Left ventricle myocardium inferior (tissue), 1 donor: ENCODE measurements at regions of chr10 and their contacts with region 1.

Region 1: DNA sequence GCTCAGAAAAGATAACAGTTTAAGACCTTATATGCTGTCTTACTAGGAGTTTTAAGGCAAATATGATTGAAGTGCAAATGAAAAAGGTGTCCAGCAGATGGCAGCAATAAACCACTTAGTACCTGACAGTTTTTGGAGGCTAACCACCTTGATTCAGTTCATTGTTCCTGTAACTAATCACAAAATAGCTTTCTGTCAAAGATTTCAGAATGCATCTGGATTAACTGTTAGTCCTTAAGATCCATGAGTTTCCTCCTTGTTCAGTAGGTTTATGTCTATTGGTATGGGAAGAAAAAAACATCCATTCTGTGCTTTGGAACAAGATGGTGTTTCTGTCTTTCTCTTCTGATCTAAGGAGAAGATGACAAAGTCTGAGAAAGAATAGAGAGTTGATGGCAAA is 46.6 kb downstream of the CCSER2 start:
- DNase-seq: no peak
- H3K4me3 ChIP-seq: no peak overlapping the region
- H3K27ac ChIP-seq: no peak overlapping the region
- H3K4me1 ChIP-seq: no peaks in the 10 kb centered on the region
- H3K27me3 ChIP-seq: no peaks in the 10 kb centered on the region
- CTCF ChIP-seq: peak; percentile 78

Region 2: DNA sequence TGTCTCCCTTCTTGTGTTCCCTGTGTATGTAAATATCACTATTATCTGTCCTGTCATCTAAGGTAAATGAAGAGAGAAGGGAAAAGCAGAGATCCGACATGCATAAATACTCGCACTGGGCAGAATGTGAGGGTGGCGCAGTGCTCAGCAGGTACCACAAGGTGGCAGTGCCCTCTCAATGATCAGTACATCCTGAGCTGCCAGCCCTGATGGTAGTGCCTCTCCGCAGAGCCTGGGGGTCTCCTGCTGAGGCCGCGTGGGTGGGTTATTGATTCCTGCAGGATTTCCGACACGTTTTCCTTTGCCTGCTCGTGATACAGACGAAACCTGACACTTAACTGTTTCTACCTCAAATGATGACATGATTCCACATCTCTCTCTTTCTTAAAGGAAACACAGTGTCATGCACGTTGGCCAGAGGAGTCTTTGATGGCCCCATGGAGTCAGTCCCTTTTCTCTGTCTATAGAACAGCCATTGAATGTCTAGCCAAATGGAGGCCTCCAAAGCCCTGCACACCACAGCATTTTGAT is 110.3 kb before region 1 on chr10:
- intact Hi-C with region 1: loop called (anchors 10 kb)
- DNase-seq: peak; percentile 50
- H3K4me3 ChIP-seq: no peak overlapping the region
- H3K27ac ChIP-seq: no peak overlapping the region
- H3K4me1 ChIP-seq: peaks cover 9% of the 10 kb centered on the region
- H3K27me3 ChIP-seq: peaks cover 47% of the 10 kb centered on the region
- CTCF ChIP-seq: peak; percentile 97

Region 3: DNA sequence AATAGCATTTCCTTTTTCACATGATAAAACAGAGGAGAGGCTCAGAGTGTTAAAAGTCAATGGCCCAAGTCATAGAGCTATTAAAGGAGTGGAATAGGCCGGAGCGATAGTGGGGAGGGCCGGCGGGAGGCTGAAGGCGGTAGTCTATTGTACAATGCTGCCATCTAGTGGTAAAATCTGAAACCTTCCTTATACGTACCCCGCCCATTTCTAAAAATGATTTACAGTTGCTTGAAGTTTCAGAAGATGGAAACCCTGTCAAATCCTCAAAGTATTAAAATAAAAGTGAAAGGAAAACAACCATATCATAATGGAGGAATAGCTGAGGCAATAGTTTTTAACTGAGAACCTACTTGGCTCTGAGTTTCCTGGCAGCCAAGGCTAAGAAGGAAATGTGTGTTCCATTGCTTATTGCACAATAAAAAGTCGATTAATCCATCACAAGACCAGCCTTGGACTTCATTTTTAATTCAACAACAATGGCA is 162.5 kb after region 1 on chr10:
- intact Hi-C with region 1: loop called (anchors 2 kb)
- DNase-seq: peak; percentile 42
- H3K4me3 ChIP-seq: no peak overlapping the region
- H3K27ac ChIP-seq: no peak overlapping the region
- H3K4me1 ChIP-seq: peaks cover 16% of the 10 kb centered on the region
- H3K27me3 ChIP-seq: peaks cover 41% of the 10 kb centered on the region
- CTCF ChIP-seq: peak; percentile 88

Region 4: DNA sequence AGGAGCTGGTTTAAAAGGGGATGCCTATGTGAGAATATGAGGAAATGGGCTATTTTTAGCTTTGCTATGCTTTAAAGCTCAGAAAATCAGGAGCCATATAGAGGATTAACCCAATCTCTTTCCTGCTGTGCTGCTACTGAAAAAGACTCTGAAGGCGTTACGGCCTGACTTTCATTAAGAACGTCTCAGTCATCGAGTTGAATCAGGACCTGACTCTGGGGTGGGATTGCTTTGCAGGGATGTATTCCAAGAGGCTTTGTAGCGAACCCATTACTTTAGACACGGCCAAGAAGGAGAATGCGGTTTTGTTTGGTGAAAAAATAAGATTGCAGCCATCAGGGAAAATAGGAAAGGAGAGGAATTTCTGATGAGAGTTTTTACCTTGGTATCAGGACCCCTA is 380.3 kb after region 1 on chr10:
- intact Hi-C with region 1: no loop called
- DNase-seq: no peak
- H3K4me3 ChIP-seq: no peak overlapping the region
- H3K27ac ChIP-seq: no peak overlapping the region
- H3K4me1 ChIP-seq: no peaks in the 10 kb centered on the region
- H3K27me3 ChIP-seq: no peaks in the 10 kb centered on the region
- CTCF ChIP-seq: no peak